ENCODE measurements at regions of chr3 and their contacts with region 1.

Region 1: GRCh38 chr3:125055913-125056745 is at the start of gene HEG1:
- DNase-seq: peak; percentile 55
- ATAC-seq: peak; percentile 74
- H3K4me3 ChIP-seq: peak within 1 kb of the TSS; percentile 79 to 92 (median 82)
- H3K27ac ChIP-seq: peak within 1 kb of the TSS; percentile 69
- H3K4me1 ChIP-seq: peaks cover 69% of the 10 kb centered on the region
- H3K27me3 ChIP-seq: peaks cover 0 to 30% of the 10 kb centered on the region in 2 experiments; a peak in 4 of 5 replicates
- CTCF ChIP-seq: no peak
- EP300 ChIP-seq: no peak
- POLR2A ChIP-seq: peak in 1 of 2 experiments; percentile 61; a peak in 2 of 4 replicates
- RAD21 ChIP-seq: no peak
- total RNA-seq, gene HEG1: 9.7 and 10.7 TPM in 2 replicates

Region 2: DNA sequence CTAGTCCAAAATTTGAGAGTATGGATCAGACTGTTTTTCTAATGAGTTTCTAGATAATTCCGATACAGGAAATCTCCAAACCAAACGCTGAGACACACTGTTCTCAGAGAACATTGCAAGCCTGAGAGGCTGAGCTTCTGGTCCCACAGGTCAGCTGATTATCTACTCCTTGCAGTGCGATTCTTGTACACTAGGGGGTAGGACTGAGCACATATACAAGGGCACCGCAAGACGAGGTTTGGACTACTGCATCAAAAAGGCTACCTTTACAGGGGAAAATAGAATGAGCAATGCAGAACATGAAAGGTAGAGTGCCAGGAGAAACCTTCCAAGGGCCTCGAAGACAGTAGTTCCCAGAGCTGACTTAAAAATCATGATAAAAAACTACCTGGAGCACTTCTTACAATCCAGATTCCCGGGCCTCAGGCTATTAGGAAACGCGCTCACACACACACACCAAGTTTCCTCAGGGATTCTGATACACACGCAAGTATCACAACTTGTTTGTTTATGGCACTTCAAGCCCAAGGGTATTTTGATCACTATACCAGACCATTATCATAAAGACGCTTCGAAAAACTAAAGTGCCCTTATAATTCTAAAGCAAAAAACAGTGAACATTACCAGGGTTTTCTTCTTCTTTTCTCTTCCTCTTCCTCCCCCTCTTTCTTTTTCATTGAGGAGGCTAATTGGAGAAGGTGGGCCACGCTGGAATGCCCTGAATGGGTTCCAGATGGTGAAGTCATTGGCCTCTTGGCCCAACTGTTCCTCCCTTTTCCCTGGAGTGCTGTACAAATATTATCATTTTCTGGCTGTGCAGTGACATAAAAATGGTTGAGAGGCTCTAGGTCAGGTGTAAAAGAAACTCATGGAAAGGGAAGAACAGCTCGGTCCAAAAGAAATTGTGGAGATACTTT is 94.7 kb after region 1 on chr3:
- CTCF ChIA-PET with region 1: no interaction called
- POLR2A ChIA-PET with region 1: no interaction called
- in situ Hi-C with region 1: no loop called
- intact Hi-C with region 1: loop called (anchors 10 kb)
- DNase-seq: peak; percentile 53
- ATAC-seq: peak; percentile 75
- H3K4me3 ChIP-seq: no peak overlapping the region
- H3K27ac ChIP-seq: no peak overlapping the region
- H3K4me1 ChIP-seq: peaks cover 21% of the 10 kb centered on the region
- H3K27me3 ChIP-seq: peaks cover 0 to 14% of the 10 kb centered on the region in 2 experiments; a peak in 2 of 5 replicates
- CTCF ChIP-seq: peak; percentile 74
- EP300 ChIP-seq: no peak
- POLR2A ChIP-seq: no peak
- RAD21 ChIP-seq: 0 out of 2 replicates have a peak, but pooled peaks have one; percentile 26